Heart left ventricle (tissue), 16 donors: ENCODE measurements at regions of chr7 and their contacts with region 1.

Region 1: GRCh38 chr7:107150375-107151073 is 18.3 kb upstream of the HBP1 start:
- DNase-seq: peak; percentile 51 to 79 (median 66)
- ATAC-seq: peak in 3 of 4 donors; percentile 67 to 74 (median 70)
- H3K4me3 ChIP-seq: no peak overlapping the region
- H3K27ac ChIP-seq: no peak overlapping the region
- H3K4me1 ChIP-seq: peaks cover 0 to 4% (median 0%) of the 10 kb centered on the region in 12 donors
- H3K27me3 ChIP-seq: no peaks in the 10 kb centered on the region
- CTCF ChIP-seq: peak; percentile 64 to 81 (median 72)
- POLR2A ChIP-seq: no peak

Region 2: GRCh38 chr7:106793015-106793975 is 357.2 kb before region 1 on chr7:
- intact Hi-C with region 1: loop called (anchors 2 to 5 kb)
- DNase-seq: no peak
- ATAC-seq: no peak
- H3K4me3 ChIP-seq: no peak overlapping the region
- H3K27ac ChIP-seq: no peak overlapping the region
- H3K4me1 ChIP-seq: no peaks in the 10 kb centered on the region
- H3K27me3 ChIP-seq: no peaks in the 10 kb centered on the region
- CTCF ChIP-seq: peak; percentile 46 to 73 (median 62)
- POLR2A ChIP-seq: no peak

Region 3: DNA sequence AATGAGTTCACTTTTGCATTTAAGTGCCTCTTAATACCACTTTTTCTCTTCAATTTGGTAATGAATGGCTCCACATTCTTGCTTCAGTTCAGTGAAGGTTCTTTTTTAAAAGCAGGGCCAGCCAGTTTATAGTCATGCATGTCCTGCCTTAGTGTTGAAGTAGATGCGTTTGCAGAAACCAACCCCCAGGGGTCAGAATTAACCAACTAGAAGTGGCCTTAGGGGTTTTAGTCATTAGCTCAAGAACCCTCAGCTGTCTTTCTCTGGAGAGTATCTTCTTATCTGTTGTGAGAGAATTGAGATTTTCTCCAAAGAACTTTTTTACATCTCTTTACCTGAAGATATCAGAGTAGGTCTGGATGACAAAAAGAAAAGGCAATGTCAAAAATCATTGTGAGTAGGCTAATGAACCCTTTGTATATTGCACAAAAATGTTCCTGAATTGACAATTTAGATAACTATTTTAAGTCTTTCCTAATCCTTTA is 203.2 kb before region 1 on chr7:
- intact Hi-C with region 1: loop called (anchors 1 to 2 kb)
- DNase-seq: peak in 4 of 5 donors; percentile 30 to 55 (median 42)
- ATAC-seq: peak; percentile 67 to 90 (median 86)
- H3K4me3 ChIP-seq: no peak overlapping the region
- H3K27ac ChIP-seq: no peak overlapping the region
- H3K4me1 ChIP-seq: peaks cover 0 to 2% (median 0%) of the 10 kb centered on the region in 12 donors
- H3K27me3 ChIP-seq: no peaks in the 10 kb centered on the region
- CTCF ChIP-seq: peak; percentile 54 to 82 (median 72)
- POLR2A ChIP-seq: no peak

Region 4: DNA sequence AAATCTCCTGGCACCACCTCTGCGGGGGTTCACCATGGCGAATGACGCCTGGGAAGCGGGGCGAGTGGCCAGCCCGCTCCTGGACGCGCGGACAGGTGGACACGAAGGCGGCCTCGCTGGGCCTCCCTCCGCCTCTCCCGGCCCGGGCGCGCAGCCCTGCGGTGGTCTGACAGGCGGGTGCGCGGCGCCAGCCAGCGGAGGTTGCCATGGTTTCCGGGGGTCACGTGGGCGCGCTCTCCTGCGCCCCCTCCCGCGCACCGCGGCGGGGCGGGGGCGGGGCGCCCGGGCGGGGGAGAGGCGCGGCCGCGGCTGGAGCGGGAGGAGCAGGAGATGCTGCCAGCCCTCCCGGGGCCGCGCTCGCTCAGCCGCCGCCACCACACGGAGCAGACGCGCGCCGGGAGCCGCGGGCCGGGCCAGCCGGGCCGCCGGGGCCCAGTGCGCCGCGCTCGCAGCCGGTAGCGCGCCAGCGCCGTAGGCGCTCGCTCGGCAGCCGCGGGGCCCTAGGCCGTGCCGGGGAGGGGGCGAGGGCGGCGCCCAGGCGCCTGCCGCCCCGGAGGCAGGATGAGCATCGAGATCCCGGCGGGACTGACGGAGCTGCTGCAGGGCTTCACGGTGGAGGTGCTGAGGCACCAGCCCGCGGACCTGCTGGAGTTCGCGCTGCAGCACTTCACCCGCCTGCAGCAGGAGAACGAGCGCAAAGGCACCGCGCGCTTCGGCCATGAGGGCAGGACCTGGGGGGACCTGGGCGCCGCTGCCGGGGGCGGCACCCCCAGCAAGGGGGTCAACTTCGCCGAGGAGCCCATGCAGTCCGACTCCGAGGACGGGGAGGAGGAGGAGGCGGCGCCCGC is 106.0 kb before region 1 on chr7 and contains the start of gene PRKAR2B:
- intact Hi-C with region 1: loop called in 1 of 10 experiments (anchors 10 kb)
- DNase-seq: peak; percentile 79 to 88 (median 84)
- ATAC-seq: peak; percentile 89 to 98 (median 96)
- H3K4me3 ChIP-seq: peak within 1 kb of the TSS; percentile 65 to 96 (median 86)
- H3K27ac ChIP-seq: peak within 1 kb of the TSS; percentile 59 to 93 (median 77)
- H3K4me1 ChIP-seq: peaks cover 0 to 20% (median 13%) of the 10 kb centered on the region in 12 donors
- H3K27me3 ChIP-seq: no peaks in the 10 kb centered on the region
- CTCF ChIP-seq: peak in 6 of 12 donors; percentile 5 to 32 (median 18)
- POLR2A ChIP-seq: no peak
- total RNA-seq, gene PRKAR2B: 14.3 to 50.6 (median 18.9) TPM

Region 5: GRCh38 chr7:107253599-107253998 is 103.1 kb after region 1 on chr7:
- intact Hi-C with region 1: no loop called
- DNase-seq: peak in 4 of 5 donors; percentile 25 to 59 (median 34)
- ATAC-seq: peak; percentile 83 to 92 (median 88)
- H3K4me3 ChIP-seq: no peak overlapping the region
- H3K27ac ChIP-seq: peak overlapping the region in 5 of 12 donors; percentile 2 to 17 (median 5)
- H3K4me1 ChIP-seq: peaks cover 0 to 28% (median 5%) of the 10 kb centered on the region in 12 donors
- H3K27me3 ChIP-seq: no peaks in the 10 kb centered on the region
- CTCF ChIP-seq: no peak
- POLR2A ChIP-seq: no peak